ENCODE measurements at regions of chr5 and their contacts with region 1.

Region 1: GRCh38 chr5:671459-672328 is 21.5 kb downstream of the TPPP start:
- DNase-seq: peak; percentile 78
- H3K4me3 ChIP-seq: peak overlapping the region; percentile 11
- H3K27ac ChIP-seq: no peak overlapping the region
- H3K4me1 ChIP-seq: peaks cover 21% of the 10 kb centered on the region
- H3K27me3 ChIP-seq: no peaks in the 10 kb centered on the region
- CTCF ChIP-seq: peak; percentile 94

Region 2: DNA sequence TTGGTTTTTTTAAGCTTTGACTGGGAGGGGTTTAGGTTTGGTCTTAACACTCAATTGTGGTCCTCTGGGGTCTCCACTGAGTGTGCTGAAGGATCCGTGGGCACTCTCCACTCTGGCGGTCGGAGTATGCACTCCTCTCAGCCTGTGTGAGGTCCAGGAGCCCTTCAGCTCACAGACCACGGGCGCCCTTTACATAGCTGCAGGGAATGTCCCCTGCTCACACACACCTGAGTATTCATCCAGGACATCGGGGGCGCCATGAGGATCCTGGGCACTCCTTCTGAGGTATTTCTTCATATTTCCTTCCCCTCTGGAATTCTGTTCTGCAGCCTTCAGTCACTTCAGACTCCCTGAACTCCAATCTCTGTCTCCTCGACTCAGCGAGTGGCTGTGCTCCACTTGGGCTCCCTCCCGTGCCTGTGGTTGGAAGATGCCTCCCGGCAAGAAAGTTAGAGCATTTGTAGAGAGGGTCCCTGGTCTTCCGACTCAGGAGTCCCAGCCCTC is 233.5 kb after region 1 on chr5:
- intact Hi-C with region 1: loop called (anchors 2 kb)
- DNase-seq: no peak
- H3K4me3 ChIP-seq: no peak overlapping the region
- H3K27ac ChIP-seq: no peak overlapping the region
- H3K4me1 ChIP-seq: no peaks in the 10 kb centered on the region
- H3K27me3 ChIP-seq: no peaks in the 10 kb centered on the region
- CTCF ChIP-seq: no peak

Measured in colonic mucosa (tissue), 4 donors.